Naive thymus-derived CD4-positive, alpha-beta T cell (primary cell): ENCODE measurements at regions of chr11 and their contacts with region 1.

Region 1: DNA sequence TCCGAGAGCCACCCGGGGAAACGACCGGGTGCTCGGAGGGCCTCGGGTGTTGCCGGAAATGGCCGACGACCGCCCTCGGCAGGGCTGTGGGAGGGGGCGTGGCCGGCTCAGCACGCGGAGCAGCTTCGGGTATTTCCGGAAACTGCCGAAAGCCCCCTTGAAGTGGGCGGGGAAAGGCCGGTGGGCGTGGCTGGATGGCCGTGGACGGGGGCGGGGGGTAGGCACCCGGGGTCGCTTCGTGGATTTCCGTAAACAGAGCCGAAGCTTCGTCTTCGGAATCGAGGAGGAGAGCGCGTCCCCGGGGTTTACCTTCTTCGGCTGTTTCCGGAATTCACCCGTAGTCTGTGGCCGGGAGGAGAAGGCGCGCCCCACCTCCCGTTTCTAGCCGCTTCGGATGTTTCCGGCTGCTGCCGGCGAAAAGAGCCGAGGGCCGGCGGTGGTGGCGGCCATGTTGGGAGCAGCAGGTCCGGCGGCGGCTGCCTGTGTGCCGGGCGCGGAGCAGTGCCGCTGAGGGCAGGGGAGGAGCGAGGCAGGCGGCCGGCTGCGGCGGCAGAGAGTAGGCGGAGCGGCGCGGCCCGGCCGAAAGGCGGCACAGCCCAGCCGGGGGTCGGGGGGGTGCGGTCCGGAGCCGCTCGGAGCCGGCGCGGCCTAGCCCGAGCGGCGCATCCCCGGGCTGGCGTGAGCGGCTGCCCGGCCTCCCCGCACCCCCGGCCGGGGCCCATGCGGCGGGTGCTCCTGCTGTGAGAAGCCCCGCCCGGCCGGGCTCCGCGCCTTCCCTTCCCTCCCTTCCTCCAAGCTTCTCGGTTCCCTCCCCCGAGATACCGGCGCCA is at the start of gene MARK2:
- DNase-seq: peak; percentile 99 to 100 (median 99)
- ATAC-seq: peak; percentile 93
- H3K4me3 ChIP-seq: peak within 1 kb of the TSS; percentile 87
- H3K4me3 Mint-ChIP-seq: peak within 1 kb of the TSS; percentile 86 to 99 (median 92)
- H3K27ac ChIP-seq: peak within 1 kb of the TSS; percentile 94
- H3K27ac Mint-ChIP-seq: peak within 1 kb of the TSS; percentile 74 to 97 (median 88)
- H3K4me1 ChIP-seq: peaks cover 32 to 35% of the 10 kb centered on the region in 2 donors
- H3K4me1 Mint-ChIP-seq: peaks cover 44 to 57% (median 54%) of the 10 kb centered on the region in 7 donors
- H3K27me3 ChIP-seq: no peaks in the 10 kb centered on the region
- H3K27me3 Mint-ChIP-seq: no peaks in the 10 kb centered on the region
- total RNA-seq, gene MARK2: 42.3 to 69.1 (median 56.8) TPM

Region 2: GRCh38 chr11:62847767-62848314 is 991.1 kb before region 1 on chr11:
- CTCF ChIA-PET with region 1: no interaction called
- POLR2A ChIA-PET with region 1: no interaction called
- intact Hi-C with region 1: no loop called
- DNase-seq: no peak
- ATAC-seq: no peak
- H3K4me3 ChIP-seq: no peak overlapping the region
- H3K4me3 Mint-ChIP-seq: no peak overlapping the region
- H3K27ac ChIP-seq: peak overlapping the region; percentile 9
- H3K27ac Mint-ChIP-seq: peak overlapping the region in 7 of 9 donors; percentile 31 to 78 (median 68)
- H3K4me1 ChIP-seq: peaks cover 13 to 15% of the 10 kb centered on the region in 2 donors
- H3K4me1 Mint-ChIP-seq: peaks cover 9 to 31% (median 20%) of the 10 kb centered on the region in 7 donors
- H3K27me3 ChIP-seq: no peaks in the 10 kb centered on the region
- H3K27me3 Mint-ChIP-seq: peaks cover 0 to 2% (median 0%) of the 10 kb centered on the region in 5 donors

Region 3: DNA sequence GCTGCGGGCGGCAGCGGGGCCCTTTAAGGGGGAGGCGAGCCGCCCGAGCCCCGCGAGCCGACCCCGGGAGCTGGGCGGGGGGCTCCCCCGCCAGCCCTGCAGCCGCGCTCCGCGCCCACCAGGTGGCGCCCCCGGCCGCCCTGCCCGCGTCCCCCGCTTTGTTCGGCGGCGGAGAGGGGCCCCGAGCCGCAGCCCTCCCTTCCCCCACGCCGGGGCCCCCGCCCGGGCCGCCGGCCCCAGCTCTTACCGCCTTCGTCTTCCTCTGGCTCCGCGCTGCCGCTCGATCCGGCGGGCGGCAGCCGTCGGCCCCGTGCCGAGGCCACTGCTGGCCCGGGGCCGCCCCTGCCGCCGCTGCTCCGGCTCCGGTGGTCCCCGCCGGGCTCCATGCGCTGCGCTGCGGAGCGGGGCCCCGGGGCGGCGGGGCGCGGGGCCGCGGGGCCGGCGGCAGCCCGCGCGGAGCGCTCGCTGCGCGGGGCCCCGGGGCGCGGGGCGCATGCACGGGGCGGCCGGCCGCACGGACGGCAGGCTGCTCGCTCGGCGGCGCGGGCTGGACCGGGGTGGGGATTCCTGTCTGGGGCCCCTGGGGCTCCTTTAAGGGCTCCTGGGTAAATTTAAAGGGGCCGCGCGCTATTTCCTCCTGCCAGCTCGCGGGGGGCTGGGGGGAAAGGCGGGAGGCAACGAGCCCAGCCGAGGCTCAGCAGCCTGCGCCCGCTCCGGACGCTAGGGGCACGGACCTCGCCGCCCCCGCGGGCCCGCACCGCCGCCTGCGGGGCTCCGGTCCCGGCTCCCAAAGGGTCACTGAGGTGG is 70.5 kb before region 1 on chr11 and contains the start of gene ZFTA:
- CTCF ChIA-PET with region 1: interaction called, 5 read pairs
- POLR2A ChIA-PET with region 1: interaction called, 3 read pairs
- intact Hi-C with region 1: loop called in 1 of 2 experiments (anchors 2 kb)
- DNase-seq: peak; percentile 34 to 79 (median 54)
- ATAC-seq: peak; percentile 84
- H3K4me3 ChIP-seq: peak within 1 kb of the TSS; percentile 77
- H3K4me3 Mint-ChIP-seq: peak within 1 kb of the TSS; percentile 87 to 99 (median 92)
- H3K27ac ChIP-seq: peak within 1 kb of the TSS; percentile 60
- H3K27ac Mint-ChIP-seq: peak within 1 kb of the TSS; percentile 34 to 94 (median 83)
- H3K4me1 ChIP-seq: peaks cover 6 to 9% of the 10 kb centered on the region in 2 donors
- H3K4me1 Mint-ChIP-seq: peaks cover 6 to 14% (median 8%) of the 10 kb centered on the region in 7 donors
- H3K27me3 ChIP-seq: peaks cover 0 to 9% of the 10 kb centered on the region in 2 donors
- H3K27me3 Mint-ChIP-seq: peaks cover 0 to 35% (median 9%) of the 10 kb centered on the region in 5 donors
- total RNA-seq, gene ZFTA: 2.1 to 3.6 (median 2.7) TPM

Region 4: DNA sequence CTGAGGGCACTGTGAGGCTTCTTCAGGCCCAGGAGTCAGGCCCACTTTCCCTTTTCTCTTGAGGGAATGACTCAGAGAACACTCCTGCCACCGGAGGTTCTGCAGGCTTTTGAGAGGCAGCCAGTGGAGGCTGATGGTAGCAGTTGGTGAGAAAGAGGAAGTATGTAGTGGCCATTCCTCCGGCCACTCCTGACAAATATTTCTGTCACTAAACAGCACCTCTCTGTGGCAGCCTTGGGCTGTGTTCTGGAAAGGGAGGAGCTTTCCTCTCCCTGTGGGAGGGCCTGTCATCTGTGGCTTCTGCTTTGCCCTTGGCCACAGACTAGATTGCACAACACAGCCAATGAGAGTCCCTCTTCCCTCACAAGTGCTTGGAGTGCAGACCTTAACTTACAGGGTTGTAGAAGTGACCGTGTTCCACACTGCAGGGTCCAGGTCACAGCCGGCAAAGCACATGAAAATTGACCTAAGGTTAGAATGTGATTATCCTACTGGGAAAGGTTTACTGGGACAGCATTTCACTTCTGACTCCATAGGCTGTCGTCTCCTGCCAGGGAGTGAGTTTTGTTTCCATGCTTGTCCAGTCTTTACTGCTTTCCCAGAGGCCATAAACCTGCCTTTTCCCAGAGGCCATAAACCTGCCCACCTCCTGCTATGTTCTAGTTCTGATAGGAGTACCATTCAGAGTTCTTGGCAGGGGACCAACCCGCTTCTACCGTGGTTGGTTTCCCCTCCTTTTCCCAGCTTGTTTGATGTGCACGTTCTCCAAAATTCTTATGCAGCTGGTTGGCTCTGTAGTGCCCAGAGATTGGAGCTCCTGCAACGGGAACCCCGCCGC is 33.3 kb after region 1 on chr11:
- CTCF ChIA-PET with region 1: interaction called, 18 read pairs
- POLR2A ChIA-PET with region 1: interaction called, 11 read pairs
- intact Hi-C with region 1: loop called in 1 of 2 experiments (anchors 1 kb)
- DNase-seq: peak in 3 of 9 donors; percentile 11 to 44 (median 23)
- ATAC-seq: peak; percentile 96
- H3K4me3 ChIP-seq: no peak overlapping the region
- H3K4me3 Mint-ChIP-seq: peak overlapping the region; percentile 45 to 72 (median 62)
- H3K27ac ChIP-seq: no peak overlapping the region
- H3K27ac Mint-ChIP-seq: peak overlapping the region in 7 of 9 donors; percentile 8 to 70 (median 41)
- H3K4me1 ChIP-seq: peaks cover 56 to 62% of the 10 kb centered on the region in 2 donors
- H3K4me1 Mint-ChIP-seq: peaks cover 58 to 88% (median 83%) of the 10 kb centered on the region in 7 donors
- H3K27me3 ChIP-seq: no peaks in the 10 kb centered on the region
- H3K27me3 Mint-ChIP-seq: no peaks in the 10 kb centered on the region

Region 5: DNA sequence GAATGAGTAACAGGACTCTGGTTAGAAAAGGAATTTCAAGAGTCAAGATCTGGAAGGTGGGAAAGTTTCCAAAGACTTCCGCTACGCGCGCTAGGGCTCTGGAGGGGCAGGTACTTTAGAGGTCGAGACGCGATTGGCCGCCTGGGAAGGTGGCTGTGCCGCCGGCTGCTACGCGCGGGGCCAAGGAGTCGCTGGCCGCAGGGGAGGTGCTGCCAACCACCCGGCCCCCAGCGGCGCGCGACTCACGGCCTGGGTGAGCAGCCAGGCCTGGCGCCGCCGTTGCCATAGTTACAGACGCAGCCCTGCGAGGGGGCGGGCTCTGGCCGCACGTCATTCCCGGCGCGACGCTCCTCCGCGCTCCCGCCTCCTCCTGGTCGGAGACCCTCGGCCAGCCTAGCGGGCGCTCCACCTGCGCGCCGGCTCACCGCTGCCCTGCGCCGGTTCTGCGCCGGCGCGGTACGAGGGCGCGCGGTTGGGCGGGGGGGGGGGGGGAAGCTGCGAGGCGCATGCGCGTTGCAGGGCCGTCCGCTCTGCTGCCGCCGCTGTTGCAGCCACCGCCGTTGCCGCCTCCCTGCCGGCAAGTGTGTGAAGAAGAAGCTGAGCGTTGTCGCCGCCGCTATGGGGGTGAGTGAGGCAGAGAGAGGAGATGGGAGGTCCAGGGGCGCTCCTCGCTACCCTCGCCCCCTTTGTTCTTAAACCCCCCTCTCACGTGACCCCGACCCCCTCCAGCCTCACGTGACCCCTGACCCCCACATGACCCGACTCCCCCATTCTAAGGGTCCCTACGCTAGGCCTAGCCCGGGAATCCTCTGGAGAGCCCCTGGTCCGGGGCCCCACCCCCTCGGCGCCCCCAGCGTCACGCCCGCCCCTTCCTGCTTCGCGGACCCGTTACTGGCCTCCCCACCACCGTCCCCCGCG is 99.8 kb after region 1 on chr11 and contains the start of gene NAA40:
- CTCF ChIA-PET with region 1: interaction called, 148 read pairs
- POLR2A ChIA-PET with region 1: interaction called, 32 read pairs
- intact Hi-C with region 1: loop called (anchors 1 kb)
- DNase-seq: peak; percentile 78 to 91 (median 84)
- ATAC-seq: peak; percentile 92
- H3K4me3 ChIP-seq: peak within 1 kb of the TSS; percentile 84
- H3K4me3 Mint-ChIP-seq: peak within 1 kb of the TSS; percentile 80 to 99 (median 94)
- H3K27ac ChIP-seq: peak within 1 kb of the TSS; percentile 73
- H3K27ac Mint-ChIP-seq: peak within 1 kb of the TSS; percentile 81 to 95 (median 89)
- H3K4me1 ChIP-seq: peaks cover 11 to 18% of the 10 kb centered on the region in 2 donors
- H3K4me1 Mint-ChIP-seq: peaks cover 22 to 28% (median 27%) of the 10 kb centered on the region in 7 donors
- H3K27me3 ChIP-seq: no peaks in the 10 kb centered on the region
- H3K27me3 Mint-ChIP-seq: peaks cover 0 to 2% (median 0%) of the 10 kb centered on the region in 5 donors
- total RNA-seq, gene NAA40: 21.0 to 39.8 (median 24.8) TPM

Region 6: GRCh38 chr11:63986156-63986931 is 147.5 kb after region 1 on chr11 and contains the start of gene OTUB1:
- CTCF ChIA-PET with region 1: interaction called, 3 read pairs
- POLR2A ChIA-PET with region 1: interaction called, 4 read pairs
- intact Hi-C with region 1: loop called (anchors 1 to 5 kb)
- DNase-seq: peak; percentile 64 to 86 (median 83)
- ATAC-seq: peak; percentile 94
- H3K4me3 ChIP-seq: peak within 1 kb of the TSS; percentile 100
- H3K4me3 Mint-ChIP-seq: peak within 1 kb of the TSS; percentile 91 to 99 (median 97)
- H3K27ac ChIP-seq: peak within 1 kb of the TSS; percentile 89
- H3K27ac Mint-ChIP-seq: peak within 1 kb of the TSS; percentile 95 to 99 (median 98)
- H3K4me1 ChIP-seq: peaks cover 14 to 20% of the 10 kb centered on the region in 2 donors
- H3K4me1 Mint-ChIP-seq: peaks cover 11 to 40% (median 35%) of the 10 kb centered on the region in 7 donors
- H3K27me3 ChIP-seq: no peaks in the 10 kb centered on the region
- H3K27me3 Mint-ChIP-seq: no peaks in the 10 kb centered on the region
- total RNA-seq, gene OTUB1: 59.4 to 99.0 (median 72.5) TPM

Region 7: GRCh38 chr11:64304316-64305072 is 465.6 kb after region 1 on chr11:
- CTCF ChIA-PET with region 1: no interaction called
- POLR2A ChIA-PET with region 1: interaction called, 3 read pairs
- intact Hi-C with region 1: loop called in 1 of 2 experiments (anchors 5 kb)
- DNase-seq: peak; percentile 79 to 95 (median 90)
- ATAC-seq: peak; percentile 40
- H3K4me3 ChIP-seq: peak overlapping the region; percentile 97
- H3K4me3 Mint-ChIP-seq: peak overlapping the region; percentile 89 to 98 (median 94)
- H3K27ac ChIP-seq: peak overlapping the region; percentile 91
- H3K27ac Mint-ChIP-seq: peak overlapping the region; percentile 81 to 98 (median 95)
- H3K4me1 ChIP-seq: peaks cover 28 to 32% of the 10 kb centered on the region in 2 donors
- H3K4me1 Mint-ChIP-seq: peaks cover 25 to 43% (median 34%) of the 10 kb centered on the region in 7 donors
- H3K27me3 ChIP-seq: peaks cover 0 to 13% of the 10 kb centered on the region in 2 donors
- H3K27me3 Mint-ChIP-seq: peaks cover 13 to 29% (median 16%) of the 10 kb centered on the region in 5 donors